CD14-positive monocyte (primary cell): ENCODE measurements at regions of chr1 and their contacts with region 1.

Region 1: DNA sequence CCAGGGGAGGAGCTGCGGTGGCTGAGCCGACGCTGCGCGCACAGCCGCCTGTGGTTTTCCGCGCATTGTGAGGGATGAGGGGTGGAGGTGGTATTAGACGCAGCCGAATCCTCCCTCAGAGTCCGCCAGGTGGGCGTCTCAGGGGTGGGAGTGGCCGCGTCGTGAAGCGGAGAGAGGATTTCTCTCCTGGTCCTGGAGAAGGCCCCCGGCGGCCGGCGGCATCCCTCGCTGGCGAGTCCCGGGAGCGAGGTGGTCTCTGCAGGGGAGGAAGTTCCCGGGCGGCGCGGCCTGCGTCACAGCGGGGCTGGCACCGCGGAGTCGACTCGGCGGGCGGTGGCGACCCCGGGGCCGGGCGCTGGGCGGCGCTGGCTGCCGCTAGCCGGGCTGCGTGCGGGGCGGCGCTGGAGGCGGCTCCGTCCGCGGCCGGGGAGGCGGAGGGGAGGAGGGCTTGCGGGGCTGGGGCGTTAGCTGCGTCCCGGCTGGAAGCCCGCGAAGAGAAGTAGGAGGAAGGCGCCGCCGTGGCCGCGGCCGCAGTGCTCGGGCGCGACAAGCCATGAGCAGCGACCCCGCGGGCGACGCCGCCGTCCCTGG is at the start of gene LRRC8C:
- DNase-seq: peak; percentile 72 to 87 (median 82)
- H3K4me3 ChIP-seq: peak within 1 kb of the TSS; percentile 89 to 93 (median 92)
- H3K4me3 Mint-ChIP-seq: peak within 1 kb of the TSS; percentile 91 to 95
- H3K27ac ChIP-seq: peak within 1 kb of the TSS; percentile 58 to 94
- H3K27ac Mint-ChIP-seq: peak within 1 kb of the TSS; percentile 88 to 96 (median 94)
- H3K4me1 ChIP-seq: peaks cover 34 to 52% of the 10 kb centered on the region in 2 donors
- H3K4me1 Mint-ChIP-seq: peaks cover 62% of the 10 kb centered on the region
- H3K27me3 ChIP-seq: no peaks in the 10 kb centered on the region
- H3K27me3 Mint-ChIP-seq: no peaks in the 10 kb centered on the region
- CTCF ChIP-seq: peak; percentile 74
- polyA plus RNA-seq, gene LRRC8C: 13.0 to 18.6 (median 16.3) TPM

Region 2: GRCh38 chr1:89589515-89589914 is 43.2 kb before region 1 on chr1:
- intact Hi-C with region 1: no loop called
- DNase-seq: no peak
- H3K4me3 ChIP-seq: no peak overlapping the region
- H3K4me3 Mint-ChIP-seq: no peak overlapping the region
- H3K27ac ChIP-seq: no peak overlapping the region
- H3K27ac Mint-ChIP-seq: no peak overlapping the region
- H3K4me1 ChIP-seq: peaks cover 16 to 21% of the 10 kb centered on the region in 2 donors
- H3K4me1 Mint-ChIP-seq: peaks cover 27% of the 10 kb centered on the region
- H3K27me3 ChIP-seq: no peaks in the 10 kb centered on the region
- H3K27me3 Mint-ChIP-seq: no peaks in the 10 kb centered on the region
- CTCF ChIP-seq: no peak

Region 3: DNA sequence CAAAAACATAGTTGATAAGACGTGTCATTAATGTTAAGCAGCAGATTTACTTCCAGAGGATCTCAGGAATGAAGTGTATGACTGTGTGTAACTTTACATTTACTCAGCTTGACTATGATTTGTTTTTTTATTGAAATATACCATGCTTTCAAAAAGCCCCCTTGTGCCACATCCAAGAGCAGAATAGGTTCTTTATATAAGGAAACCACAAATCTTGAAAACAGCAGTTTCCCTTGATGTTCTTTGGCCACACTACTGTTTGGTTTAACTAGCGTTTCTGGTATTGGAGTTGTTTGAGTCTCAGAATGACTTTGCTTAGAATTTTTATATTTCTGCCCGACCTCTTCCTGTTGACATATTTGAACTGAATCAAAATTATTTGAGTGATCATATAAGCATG is 25.1 kb after region 1 on chr1:
- intact Hi-C with region 1: no loop called
- DNase-seq: no peak
- H3K4me3 ChIP-seq: no peak overlapping the region
- H3K4me3 Mint-ChIP-seq: no peak overlapping the region
- H3K27ac ChIP-seq: no peak overlapping the region
- H3K27ac Mint-ChIP-seq: peak overlapping the region in 3 of 7 donors; percentile 12 to 31 (median 15)
- H3K4me1 ChIP-seq: peaks cover 5 to 6% of the 10 kb centered on the region in 2 donors
- H3K4me1 Mint-ChIP-seq: peaks cover 68% of the 10 kb centered on the region
- H3K27me3 ChIP-seq: no peaks in the 10 kb centered on the region
- H3K27me3 Mint-ChIP-seq: no peaks in the 10 kb centered on the region
- CTCF ChIP-seq: no peak

Region 4: DNA sequence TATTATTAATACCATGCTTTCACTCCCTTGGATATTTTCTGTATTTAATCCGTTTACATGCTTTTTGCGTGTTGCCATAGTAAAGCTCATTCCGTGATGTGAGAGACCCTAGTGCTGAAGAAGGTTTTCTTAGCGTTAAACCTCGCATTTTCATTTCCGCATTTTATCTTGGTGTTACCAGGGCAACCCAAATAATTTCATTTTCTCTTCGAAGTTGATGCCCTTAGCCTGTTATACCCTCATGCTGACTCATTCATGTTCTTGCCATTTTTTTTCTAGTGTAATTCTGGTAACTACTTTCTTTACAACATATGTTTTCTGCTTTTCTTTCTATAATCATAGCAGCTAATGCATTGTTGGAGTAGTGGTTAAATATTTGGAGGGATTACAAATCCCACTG is 37.4 kb after region 1 on chr1:
- intact Hi-C with region 1: loop called in 1 of 2 experiments (anchors 5 kb)
- DNase-seq: peak; percentile 81 to 96 (median 91)
- H3K4me3 ChIP-seq: peak overlapping the region in 2 of 3 experiments; percentile 33 to 59
- H3K4me3 Mint-ChIP-seq: peak overlapping the region; percentile 2 to 55
- H3K27ac ChIP-seq: peak overlapping the region in 1 of 2 donors; percentile 76
- H3K27ac Mint-ChIP-seq: peak overlapping the region; percentile 64 to 96 (median 94)
- H3K4me1 ChIP-seq: peaks cover 61 to 73% of the 10 kb centered on the region in 2 donors
- H3K4me1 Mint-ChIP-seq: peaks cover 89% of the 10 kb centered on the region
- H3K27me3 ChIP-seq: no peaks in the 10 kb centered on the region
- H3K27me3 Mint-ChIP-seq: peaks cover 0 to 2% (median 0%) of the 10 kb centered on the region in 3 donors
- CTCF ChIP-seq: no peak

Region 5: DNA sequence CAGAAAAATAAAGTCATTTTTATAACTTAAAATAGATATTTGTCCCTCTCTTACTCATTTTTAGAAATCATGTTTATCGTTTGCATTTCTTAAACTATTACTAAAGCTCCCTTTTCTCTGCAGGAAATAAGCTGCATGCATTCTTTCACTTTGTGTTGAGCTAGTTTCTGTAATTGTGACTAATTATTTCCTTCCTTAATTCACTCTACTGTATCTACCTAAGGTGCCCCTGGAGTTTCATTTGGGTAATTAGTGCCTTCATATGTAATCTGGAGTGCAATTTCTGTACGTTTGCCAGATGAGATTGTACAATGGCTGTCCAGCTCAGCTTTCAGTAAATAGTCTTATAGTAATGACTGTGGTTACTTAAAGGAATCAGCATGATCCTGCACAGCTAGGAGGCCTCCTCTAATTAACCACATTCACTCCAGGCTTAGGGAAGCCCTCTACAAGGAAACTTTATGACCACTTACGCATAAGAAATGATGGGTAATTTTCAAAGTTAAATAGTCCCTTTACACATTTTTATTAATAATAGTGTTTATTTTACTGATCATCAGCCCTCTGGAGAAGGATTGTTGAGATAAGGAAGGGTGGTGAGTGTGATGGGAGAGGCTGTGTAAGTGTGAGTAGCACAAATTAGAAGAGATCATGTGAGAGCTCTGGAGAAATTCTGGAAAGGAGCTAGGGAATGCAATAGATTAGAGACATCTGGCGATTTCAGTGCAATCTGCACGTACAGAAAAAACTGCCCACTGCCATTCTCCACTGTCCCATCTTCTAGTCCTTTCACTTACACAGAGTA is 87.0 kb after region 1 on chr1:
- intact Hi-C with region 1: loop called in 1 of 2 experiments (anchors 1 kb)
- DNase-seq: peak; percentile 56 to 91 (median 85)
- H3K4me3 ChIP-seq: peak overlapping the region in 2 of 3 experiments; percentile 25 to 58
- H3K4me3 Mint-ChIP-seq: peak overlapping the region; percentile 27 to 84
- H3K27ac ChIP-seq: peak overlapping the region; percentile 13 to 83
- H3K27ac Mint-ChIP-seq: peak overlapping the region; percentile 85 to 98 (median 96)
- H3K4me1 ChIP-seq: peaks cover 58 to 68% of the 10 kb centered on the region in 2 donors
- H3K4me1 Mint-ChIP-seq: peaks cover 67% of the 10 kb centered on the region
- H3K27me3 ChIP-seq: no peaks in the 10 kb centered on the region
- H3K27me3 Mint-ChIP-seq: peaks cover 0 to 2% (median 0%) of the 10 kb centered on the region in 3 donors
- CTCF ChIP-seq: peak; percentile 17

Region 6: GRCh38 chr1:89762779-89763648 is 130.3 kb after region 1 on chr1:
- intact Hi-C with region 1: loop called (anchors 2 to 5 kb)
- DNase-seq: peak; percentile 73 to 79 (median 77)
- H3K4me3 ChIP-seq: peak overlapping the region; percentile 47 to 74 (median 48)
- H3K4me3 Mint-ChIP-seq: peak overlapping the region; percentile 91 to 98
- H3K27ac ChIP-seq: peak overlapping the region in 1 of 2 donors; percentile 79
- H3K27ac Mint-ChIP-seq: peak overlapping the region; percentile 62 to 95 (median 88)
- H3K4me1 ChIP-seq: peaks cover 52 to 57% of the 10 kb centered on the region in 2 donors
- H3K4me1 Mint-ChIP-seq: peaks cover 55% of the 10 kb centered on the region
- H3K27me3 ChIP-seq: no peaks in the 10 kb centered on the region
- H3K27me3 Mint-ChIP-seq: peaks cover 0 to 5% (median 3%) of the 10 kb centered on the region in 3 donors
- CTCF ChIP-seq: peak; percentile 98

Region 7: GRCh38 chr1:89994805-89995597 is 362.2 kb after region 1 on chr1 and contains the start of gene ZNF326:
- intact Hi-C with region 1: loop called (anchors 10 kb)
- DNase-seq: peak; percentile 88 to 91 (median 91)
- H3K4me3 ChIP-seq: peak within 1 kb of the TSS; percentile 73 to 85 (median 78)
- H3K4me3 Mint-ChIP-seq: peak within 1 kb of the TSS; percentile 97 to 99
- H3K27ac ChIP-seq: peak within 1 kb of the TSS; percentile 90 to 94
- H3K27ac Mint-ChIP-seq: peak within 1 kb of the TSS; percentile 94 to 99 (median 97)
- H3K4me1 ChIP-seq: peaks cover 16 to 25% of the 10 kb centered on the region in 2 donors
- H3K4me1 Mint-ChIP-seq: peaks cover 28% of the 10 kb centered on the region
- H3K27me3 ChIP-seq: no peaks in the 10 kb centered on the region
- H3K27me3 Mint-ChIP-seq: peaks cover 0 to 4% (median 1%) of the 10 kb centered on the region in 3 donors
- CTCF ChIP-seq: no peak
- polyA plus RNA-seq, gene ZNF326: 3.8 to 5.0 (median 4.5) TPM